ENCODE measurements at regions of chr10 and their contacts with region 1.

Region 1: GRCh38 chr10:119750391-119751230 is 24.8 kb downstream of the INPP5F start:
- DNase-seq: peak; percentile 81
- ATAC-seq: peak; percentile 97
- H3K4me3 ChIP-seq: peak overlapping the region in 1 of 5 experiments; percentile 25
- H3K4me3 Mint-ChIP-seq: peak overlapping the region; percentile 77
- H3K27ac ChIP-seq: peak overlapping the region; percentile 32 to 59
- H3K27ac Mint-ChIP-seq: peak overlapping the region; percentile 83
- H3K4me1 ChIP-seq: peaks cover 9 to 16% of the 10 kb centered on the region in 2 donors
- H3K4me1 Mint-ChIP-seq: peaks cover 29% of the 10 kb centered on the region
- H3K27me3 ChIP-seq: no peaks in the 10 kb centered on the region
- H3K27me3 Mint-ChIP-seq: no peaks in the 10 kb centered on the region
- CTCF ChIP-seq: peak; percentile 93

Region 2: GRCh38 chr10:119305860-119306513 is 444.6 kb before region 1 on chr10:
- CTCF ChIA-PET with region 1: no interaction called
- POLR2A ChIA-PET with region 1: no interaction called
- intact Hi-C with region 1: no loop called
- DNase-seq: peak; percentile 90
- ATAC-seq: peak; percentile 71
- H3K4me3 ChIP-seq: peak overlapping the region; percentile 31 to 62 (median 42)
- H3K4me3 Mint-ChIP-seq: peak overlapping the region; percentile 87
- H3K27ac ChIP-seq: peak overlapping the region; percentile 99
- H3K27ac Mint-ChIP-seq: peak overlapping the region; percentile 99
- H3K4me1 ChIP-seq: peaks cover 97 to 100% of the 10 kb centered on the region in 2 donors
- H3K4me1 Mint-ChIP-seq: peaks cover 95% of the 10 kb centered on the region
- H3K27me3 ChIP-seq: no peaks in the 10 kb centered on the region
- H3K27me3 Mint-ChIP-seq: no peaks in the 10 kb centered on the region
- CTCF ChIP-seq: no peak

Region 3: GRCh38 chr10:119705434-119705831 is 45.2 kb before region 1 on chr10:
- CTCF ChIA-PET with region 1: interaction called, 13 read pairs
- POLR2A ChIA-PET with region 1: interaction called, 3 read pairs
- intact Hi-C with region 1: loop called (anchors 1 kb)
- DNase-seq: peak; percentile 62
- ATAC-seq: peak; percentile 13
- H3K4me3 ChIP-seq: peak overlapping the region in 3 of 5 experiments; percentile 18 to 46 (median 42)
- H3K4me3 Mint-ChIP-seq: peak overlapping the region; percentile 90
- H3K27ac ChIP-seq: peak overlapping the region; percentile 94
- H3K27ac Mint-ChIP-seq: peak overlapping the region; percentile 98
- H3K4me1 ChIP-seq: peaks cover 93 to 97% of the 10 kb centered on the region in 2 donors
- H3K4me1 Mint-ChIP-seq: peaks cover 81% of the 10 kb centered on the region
- H3K27me3 ChIP-seq: no peaks in the 10 kb centered on the region
- H3K27me3 Mint-ChIP-seq: no peaks in the 10 kb centered on the region
- CTCF ChIP-seq: no peak

Region 4: GRCh38 chr10:119737827-119738226 is 12.8 kb before region 1 on chr10:
- CTCF ChIA-PET with region 1: interaction called, 15 read pairs
- POLR2A ChIA-PET with region 1: no interaction called
- intact Hi-C with region 1: no loop called
- DNase-seq: no peak
- ATAC-seq: no peak
- H3K4me3 ChIP-seq: no peak overlapping the region
- H3K4me3 Mint-ChIP-seq: no peak overlapping the region
- H3K27ac ChIP-seq: no peak overlapping the region
- H3K27ac Mint-ChIP-seq: no peak overlapping the region
- H3K4me1 ChIP-seq: peaks cover 20 to 32% of the 10 kb centered on the region in 2 donors
- H3K4me1 Mint-ChIP-seq: peaks cover 49% of the 10 kb centered on the region
- H3K27me3 ChIP-seq: no peaks in the 10 kb centered on the region
- H3K27me3 Mint-ChIP-seq: no peaks in the 10 kb centered on the region
- CTCF ChIP-seq: no peak

Region 5: DNA sequence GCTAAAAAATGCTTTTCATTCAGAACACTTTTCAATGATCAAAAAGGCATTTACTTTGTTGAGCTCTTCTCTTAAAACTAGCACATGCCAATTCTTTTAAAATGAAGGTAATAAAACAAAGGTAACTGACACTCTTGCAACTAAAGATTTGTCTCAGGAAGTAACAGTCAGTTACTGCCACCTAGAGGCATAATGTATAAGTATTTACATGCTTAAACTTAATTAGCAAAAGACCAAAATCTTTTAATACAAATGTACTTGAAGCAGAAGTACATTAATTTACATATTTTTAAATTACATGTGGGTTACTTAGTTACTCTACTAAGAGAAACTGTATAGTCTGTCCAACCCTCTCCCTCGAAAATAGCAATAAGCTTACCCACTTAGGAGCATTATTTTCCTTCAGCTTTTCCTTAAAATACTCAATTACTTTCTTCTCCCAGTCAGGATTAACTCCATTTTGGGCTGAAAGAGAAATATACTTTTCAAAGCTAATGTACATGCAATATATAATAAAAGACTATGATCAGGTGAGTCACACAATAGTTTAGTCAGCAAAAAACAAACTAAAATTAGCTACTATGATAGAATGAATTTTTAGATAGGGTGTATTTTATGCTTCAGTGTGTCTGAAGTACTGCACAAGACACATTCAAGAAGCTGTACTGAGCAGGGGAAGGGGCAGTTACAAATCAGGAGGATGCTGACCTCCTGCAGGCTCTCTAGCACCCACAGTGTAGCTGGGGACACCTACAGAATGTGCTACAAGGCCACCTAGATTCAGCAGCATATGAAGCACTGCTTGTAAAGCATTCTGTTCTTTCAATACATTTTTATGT is 109.0 kb after region 1 on chr10:
- CTCF ChIA-PET with region 1: interaction called, 64 read pairs
- POLR2A ChIA-PET with region 1: no interaction called
- intact Hi-C with region 1: loop called (anchors 1 kb)
- DNase-seq: peak; percentile 71
- ATAC-seq: peak; percentile 58
- H3K4me3 ChIP-seq: no peak overlapping the region
- H3K4me3 Mint-ChIP-seq: no peak overlapping the region
- H3K27ac ChIP-seq: peak overlapping the region in 1 of 2 donors; percentile 47
- H3K27ac Mint-ChIP-seq: no peak overlapping the region
- H3K4me1 ChIP-seq: peaks cover 3 to 7% of the 10 kb centered on the region in 2 donors
- H3K4me1 Mint-ChIP-seq: peaks cover 26% of the 10 kb centered on the region
- H3K27me3 ChIP-seq: no peaks in the 10 kb centered on the region
- H3K27me3 Mint-ChIP-seq: no peaks in the 10 kb centered on the region
- CTCF ChIP-seq: peak; percentile 83

Region 6: GRCh38 chr10:120735773-120736371 is 985.3 kb after region 1 on chr10:
- CTCF ChIA-PET with region 1: interaction called, 3 read pairs
- POLR2A ChIA-PET with region 1: no interaction called
- intact Hi-C with region 1: loop called (anchors 10 kb)
- DNase-seq: peak; percentile 18
- ATAC-seq: no peak
- H3K4me3 ChIP-seq: no peak overlapping the region
- H3K4me3 Mint-ChIP-seq: no peak overlapping the region
- H3K27ac ChIP-seq: no peak overlapping the region
- H3K27ac Mint-ChIP-seq: no peak overlapping the region
- H3K4me1 ChIP-seq: no peaks in the 10 kb centered on the region
- H3K4me1 Mint-ChIP-seq: no peaks in the 10 kb centered on the region
- H3K27me3 ChIP-seq: no peaks in the 10 kb centered on the region
- H3K27me3 Mint-ChIP-seq: peaks cover 12% of the 10 kb centered on the region
- CTCF ChIP-seq: peak; percentile 76

Measured in B cell (primary cell).